Ascending aorta (tissue), 2 donors: ENCODE measurements at regions of chr12 and their contacts with region 1.

Region 1: GRCh38 chr12:109880016-109880931 is at the start of gene GLTP:
- DNase-seq: peak; percentile 39 to 91
- H3K4me3 ChIP-seq: peak within 1 kb of the TSS; percentile 75 to 96
- H3K27ac ChIP-seq: peak within 1 kb of the TSS; percentile 59 to 65
- H3K4me1 ChIP-seq: peaks cover 12 to 19% of the 10 kb centered on the region in 2 donors
- H3K27me3 ChIP-seq: no peaks in the 10 kb centered on the region
- CTCF ChIP-seq: peak in 2 of 3 experiments; percentile 19 to 97
- total RNA-seq, gene GLTP: 105 TPM

Region 2: DNA sequence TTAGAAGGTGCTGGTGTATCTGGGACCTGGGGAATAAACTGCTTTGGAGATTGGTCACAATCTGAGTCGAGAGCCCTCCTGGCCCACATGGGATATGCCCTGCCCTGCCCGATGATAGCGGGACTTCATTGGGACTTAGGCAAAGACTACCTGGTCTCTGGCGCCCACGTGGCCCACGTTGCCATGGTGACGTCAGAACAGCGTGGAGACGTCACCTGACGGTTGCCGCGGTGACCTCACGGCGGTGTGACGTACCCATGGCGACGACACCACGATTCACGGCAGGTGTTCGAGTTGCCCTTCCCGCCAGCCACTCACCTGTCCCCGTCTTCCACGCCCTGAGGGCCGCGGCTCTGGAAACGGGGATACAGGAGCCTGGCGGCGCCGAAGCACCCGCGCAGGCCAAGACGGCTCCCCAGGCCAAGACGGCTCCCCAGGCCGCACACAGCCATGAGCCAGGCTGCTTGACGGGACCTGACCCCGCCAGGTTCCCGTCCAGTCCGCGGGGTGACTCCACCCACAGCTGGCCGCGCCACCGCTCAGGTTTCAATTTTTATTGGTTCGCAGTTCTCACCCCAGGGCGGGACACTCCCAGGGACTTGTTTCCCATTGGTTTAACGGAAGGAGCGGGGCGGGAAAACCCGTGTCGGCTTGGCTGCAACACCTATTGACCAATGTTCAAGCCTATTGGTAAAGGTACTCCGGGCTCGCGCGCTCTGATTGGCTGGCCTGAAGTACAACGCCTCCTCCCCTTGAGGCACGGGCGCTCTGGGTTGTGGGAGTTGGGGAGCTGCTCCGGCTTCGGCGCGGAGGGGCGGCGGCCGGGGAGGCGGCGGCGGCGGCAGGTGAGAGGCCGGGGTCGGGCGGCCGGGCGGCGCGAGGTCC is 307.0 kb before region 1 on chr12 and contains the starts of genes MMAB and MVK:
- intact Hi-C with region 1: loop called (anchors 1 kb)
- DNase-seq: peak; percentile 99 to 100
- H3K4me3 ChIP-seq: peak within 1 kb of the TSS; percentile 68 to 78
- H3K27ac ChIP-seq: peak within 1 kb of the TSS; percentile 64 to 78
- H3K4me1 ChIP-seq: peaks cover 0 to 12% of the 10 kb centered on the region in 2 donors
- H3K27me3 ChIP-seq: no peaks in the 10 kb centered on the region
- CTCF ChIP-seq: no peak
- total RNA-seq, gene MMAB: 43.5 TPM
- total RNA-seq, gene MVK: 53.1 TPM

Region 3: DNA sequence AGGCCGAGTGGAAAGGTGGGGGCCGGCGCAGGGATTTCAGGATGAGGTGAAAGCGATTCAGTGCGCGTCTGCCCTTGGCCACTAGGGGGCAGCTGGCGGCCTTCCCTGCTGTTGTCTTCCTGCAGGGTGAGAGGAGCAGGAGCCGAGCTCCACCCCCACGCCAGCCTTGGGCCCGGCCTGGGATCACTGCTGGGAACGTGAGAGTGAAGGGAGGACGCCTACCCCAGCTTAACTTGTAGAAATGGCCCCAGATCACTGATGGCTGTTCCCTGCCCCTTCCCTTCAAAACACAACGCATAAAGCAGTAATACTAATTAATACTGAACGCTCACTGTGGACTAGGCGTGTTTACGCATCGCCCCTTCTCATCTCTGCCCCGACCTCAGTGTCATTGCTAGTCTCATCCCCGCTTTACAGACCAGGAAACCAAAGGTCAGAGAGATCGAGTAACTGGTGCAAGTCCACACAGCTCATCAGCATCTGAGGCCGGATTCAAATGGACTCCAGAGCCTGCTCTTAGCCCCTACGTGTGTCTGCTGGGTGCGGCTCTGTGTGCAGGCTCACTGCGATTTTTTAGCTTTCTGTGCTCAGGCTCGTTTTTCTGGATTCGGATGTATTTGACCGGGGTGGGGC is 282.4 kb before region 1 on chr12:
- intact Hi-C with region 1: loop called (anchors 1 kb)
- DNase-seq: peak; percentile 17 to 87
- H3K4me3 ChIP-seq: no peak overlapping the region
- H3K27ac ChIP-seq: no peak overlapping the region
- H3K4me1 ChIP-seq: peaks cover 0 to 4% of the 10 kb centered on the region in 2 donors
- H3K27me3 ChIP-seq: no peaks in the 10 kb centered on the region
- CTCF ChIP-seq: peak; percentile 89 to 91 (median 91)

Region 4: GRCh38 chr12:109713187-109713984 is 166.9 kb before region 1 on chr12 and contains the start of gene FAM222A:
- intact Hi-C with region 1: loop called (anchors 1 kb)
- DNase-seq: peak; percentile 85 to 98
- H3K4me3 ChIP-seq: peak within 1 kb of the TSS; percentile 65 to 94
- H3K27ac ChIP-seq: no peak within 1 kb of the TSS
- H3K4me1 ChIP-seq: peaks cover 0 to 6% of the 10 kb centered on the region in 2 donors
- H3K27me3 ChIP-seq: peaks cover 24% of the 10 kb centered on the region
- CTCF ChIP-seq: peak in 1 of 3 experiments; percentile 18
- total RNA-seq, gene FAM222A: 3.3 TPM

Region 5: GRCh38 chr12:109804820-109805761 is 75.2 kb before region 1 on chr12:
- intact Hi-C with region 1: loop called (anchors 1 kb)
- DNase-seq: peak in 1 of 2 donors; percentile 85
- H3K4me3 ChIP-seq: no peak overlapping the region
- H3K27ac ChIP-seq: no peak overlapping the region
- H3K4me1 ChIP-seq: no peaks in the 10 kb centered on the region
- H3K27me3 ChIP-seq: no peaks in the 10 kb centered on the region
- CTCF ChIP-seq: peak; percentile 85 to 97 (median 97)

Region 6: GRCh38 chr12:109844983-109845823 is 35.1 kb before region 1 on chr12:
- intact Hi-C with region 1: loop called (anchors 2 kb)
- DNase-seq: peak; percentile 27 to 91
- H3K4me3 ChIP-seq: peak overlapping the region; percentile 25 to 34
- H3K27ac ChIP-seq: no peak overlapping the region
- H3K4me1 ChIP-seq: peaks cover 0 to 3% of the 10 kb centered on the region in 2 donors
- H3K27me3 ChIP-seq: no peaks in the 10 kb centered on the region
- CTCF ChIP-seq: peak; percentile 97 to 99 (median 98)

Region 7: DNA sequence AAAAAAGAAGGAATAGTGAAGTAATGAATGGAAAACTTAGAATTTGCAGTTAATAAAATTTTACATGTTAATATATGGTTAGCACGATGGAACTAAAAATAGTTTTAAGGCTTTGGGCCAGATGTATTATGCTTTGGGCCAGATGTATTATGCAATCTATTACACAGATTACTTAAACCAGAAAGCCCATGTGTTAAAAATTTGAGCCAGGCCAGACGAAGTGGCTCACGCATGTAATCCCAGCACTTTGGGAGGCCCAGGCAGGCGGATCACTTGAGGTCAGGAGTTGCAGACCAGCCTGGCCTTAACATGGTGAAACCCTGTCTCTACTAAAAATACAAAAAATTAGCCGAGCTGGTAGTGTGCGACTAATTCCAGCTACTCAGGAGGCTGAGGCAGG is 261.1 kb after region 1 on chr12:
- intact Hi-C with region 1: no loop called
- DNase-seq: peak in 1 of 2 donors; percentile 80
- H3K4me3 ChIP-seq: no peak overlapping the region
- H3K27ac ChIP-seq: peak overlapping the region; percentile 42 to 73
- H3K4me1 ChIP-seq: peaks cover 0 to 3% of the 10 kb centered on the region in 2 donors
- H3K27me3 ChIP-seq: no peaks in the 10 kb centered on the region
- CTCF ChIP-seq: no peak